AG04449 (cell line): ENCODE measurements at regions of chr7 and their contacts with region 1.

Region 1: DNA sequence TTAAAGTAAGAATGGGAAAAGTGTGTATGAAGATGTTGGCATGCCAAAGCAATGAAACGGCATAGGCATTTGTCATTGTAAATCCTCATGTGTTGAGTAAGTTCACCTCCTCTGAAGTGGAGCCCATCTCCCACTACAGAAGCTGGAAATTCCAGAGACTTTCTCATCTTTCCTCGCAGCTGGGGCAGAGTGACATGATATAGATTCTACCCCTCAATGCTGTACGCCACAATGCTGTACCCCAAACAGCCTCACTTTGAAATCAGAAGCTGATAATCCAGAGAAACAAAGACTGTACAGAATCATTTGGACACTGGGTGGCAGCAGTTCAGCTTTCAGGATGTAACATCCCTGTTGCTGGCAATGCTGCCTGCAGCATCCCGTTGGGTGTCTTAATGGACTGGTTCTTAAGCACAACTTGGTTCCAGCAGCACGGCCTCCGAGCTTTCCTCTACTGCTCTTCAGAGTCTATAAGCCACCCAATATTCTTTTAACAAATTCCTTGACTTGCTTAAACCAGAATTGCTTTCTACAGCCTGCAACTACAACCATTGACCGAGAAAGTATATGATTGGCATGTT is 18.8 kb downstream of the ZC3HAV1L start:
- DNase-seq: no peak
- H3K4me3 ChIP-seq: no peak overlapping the region
- CTCF ChIP-seq: peak; percentile 72

Region 2: DNA sequence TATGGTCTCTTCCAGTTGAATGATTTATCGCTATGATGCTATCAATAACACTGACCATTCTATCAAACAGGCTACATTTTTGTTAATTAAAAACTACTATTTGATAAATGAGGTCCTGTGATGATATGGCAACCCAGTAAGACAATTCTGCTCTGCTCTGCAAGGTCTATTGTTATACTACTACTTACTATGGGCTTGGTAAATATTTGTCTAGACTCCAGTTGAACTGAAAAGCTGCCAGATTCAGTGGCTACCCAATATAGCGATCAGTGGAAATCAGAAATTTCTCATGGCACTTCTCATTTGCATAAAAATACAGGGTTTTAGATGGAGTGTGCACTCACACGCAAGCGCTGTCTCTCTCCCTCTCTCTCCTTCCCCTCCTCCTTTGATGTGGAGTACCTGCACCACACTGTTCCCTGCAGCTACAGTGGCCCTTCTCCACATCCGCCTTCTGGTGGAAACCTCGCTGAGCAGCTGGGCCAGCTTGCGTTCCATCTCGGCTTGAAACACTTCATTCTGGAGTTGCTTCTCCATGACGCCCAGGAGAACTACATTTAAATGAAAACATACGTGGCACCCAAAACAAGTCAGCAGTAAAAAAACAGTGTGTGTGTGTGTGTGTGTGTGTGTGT is 113.7 kb before region 1 on chr7:
- CTCF ChIA-PET with region 1: no interaction called
- POLR2A ChIA-PET with region 1: no interaction called
- DNase-seq: no peak
- H3K4me3 ChIP-seq: no peak overlapping the region
- CTCF ChIP-seq: no peak

Region 3: DNA sequence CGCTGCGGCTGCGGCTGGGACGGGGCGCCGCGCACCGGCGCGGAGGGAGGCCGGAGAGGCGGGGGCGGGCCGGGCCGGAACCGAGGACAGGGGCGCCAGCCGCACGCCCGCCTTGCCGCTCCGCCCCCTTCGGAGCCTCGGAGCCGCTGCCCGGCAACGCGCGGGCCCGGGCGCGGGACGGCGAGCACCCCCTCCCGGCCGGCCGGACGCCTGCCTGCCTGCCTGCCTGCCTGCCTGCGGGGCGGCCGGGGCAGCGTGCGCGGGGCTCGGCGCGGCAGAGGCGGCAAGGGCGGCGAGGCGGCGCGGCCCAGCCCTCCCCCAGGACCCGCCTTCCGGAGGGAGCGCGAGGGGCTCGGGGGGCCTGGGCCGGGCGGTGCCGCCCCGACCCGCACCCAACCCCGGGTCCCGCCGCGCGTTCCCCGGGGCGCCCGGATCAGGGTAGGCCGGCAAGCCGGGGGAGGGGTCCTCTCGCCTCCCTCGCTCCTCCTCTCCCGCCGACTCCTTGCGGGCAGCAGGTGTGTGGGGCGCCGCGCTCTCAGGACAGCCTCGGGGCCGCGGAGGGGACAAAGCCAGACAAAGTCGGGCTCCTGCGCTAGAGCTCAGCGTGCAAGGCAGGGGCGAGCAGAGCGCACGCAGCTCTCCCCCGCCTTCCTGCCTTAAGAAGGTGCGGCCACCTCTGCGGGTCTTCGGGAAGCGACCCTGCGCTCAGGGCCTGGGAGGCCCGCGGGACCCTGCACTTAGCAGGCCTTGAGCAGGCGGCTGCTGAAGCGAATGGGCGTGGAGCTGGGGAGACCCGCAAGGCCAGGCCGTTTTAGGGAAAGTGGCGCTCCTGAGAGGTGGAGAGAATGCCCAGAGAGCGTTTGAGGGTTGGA is 35.5 kb before region 1 on chr7 and contains the start of gene KIAA1549:
- CTCF ChIA-PET with region 1: interaction called, 10 read pairs
- POLR2A ChIA-PET with region 1: no interaction called
- DNase-seq: no peak
- H3K4me3 ChIP-seq: peak within 1 kb of the TSS; percentile 66
- CTCF ChIP-seq: no peak

Region 4: DNA sequence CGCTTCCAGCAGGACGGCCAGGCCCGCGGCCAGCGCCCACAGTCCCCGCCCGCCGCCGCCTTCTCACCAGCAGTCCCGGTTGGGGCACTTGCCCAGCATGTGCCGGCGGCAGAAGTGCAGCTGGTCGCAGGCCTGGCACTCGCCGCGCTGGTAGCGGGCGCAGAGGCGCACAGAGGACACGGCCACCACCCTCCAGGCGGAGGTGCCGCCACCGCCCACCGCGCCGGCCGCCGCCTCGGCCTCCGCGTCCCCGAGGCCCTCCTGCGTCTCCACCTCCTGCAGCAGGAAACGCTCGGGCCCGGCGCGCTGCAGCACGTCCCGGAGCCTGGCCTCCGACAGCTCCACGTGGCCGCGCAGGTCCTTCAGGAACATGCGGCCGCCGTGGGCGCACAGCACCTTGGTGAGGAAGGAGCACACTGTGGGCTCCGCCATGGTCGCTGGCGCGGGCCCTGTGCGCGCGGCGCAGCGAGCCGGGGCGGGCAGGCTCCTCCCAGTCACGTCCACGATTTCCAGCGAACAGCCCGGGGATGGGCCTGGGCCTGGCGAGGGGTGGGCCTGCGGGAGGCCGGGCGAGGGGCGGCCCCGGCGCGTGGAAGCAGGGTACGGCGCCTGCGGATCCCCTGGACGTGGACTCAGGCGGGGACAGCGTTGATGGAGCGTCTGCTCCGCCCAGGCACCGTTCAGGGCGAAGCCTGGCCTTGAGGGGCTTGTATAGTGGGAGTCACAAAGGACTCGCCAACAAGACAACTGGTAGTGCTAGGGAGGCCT is 18.7 kb after region 1 on chr7 and contains the start of gene ZC3HAV1L:
- CTCF ChIA-PET with region 1: interaction called, 33 read pairs
- POLR2A ChIA-PET with region 1: no interaction called
- DNase-seq: no peak
- H3K4me3 ChIP-seq: peak within 1 kb of the TSS; percentile 80
- CTCF ChIP-seq: no peak

Region 5: DNA sequence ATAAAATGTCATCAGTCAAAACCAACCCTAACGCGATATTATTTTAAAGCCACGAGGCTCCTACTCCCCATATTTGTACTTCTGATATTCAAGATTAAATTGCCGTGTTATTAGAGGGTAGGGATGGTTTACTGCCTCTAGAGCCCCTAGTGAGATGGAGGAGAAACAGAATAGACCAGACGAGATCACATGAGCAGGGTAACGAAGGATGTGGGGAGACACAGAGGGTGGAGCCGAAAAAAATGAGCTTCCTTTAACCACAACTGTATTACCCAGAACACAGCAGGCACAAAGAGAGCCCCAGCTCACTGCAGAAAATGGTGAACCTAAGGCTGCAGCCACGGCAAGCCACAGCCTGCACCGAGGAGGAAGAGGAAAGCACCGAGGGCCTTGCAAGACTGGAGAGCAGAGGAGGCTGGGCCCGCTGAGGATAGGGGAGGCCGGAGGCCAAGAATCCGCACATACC is 78.2 kb after region 1 on chr7:
- CTCF ChIA-PET with region 1: no interaction called
- POLR2A ChIA-PET with region 1: no interaction called
- DNase-seq: no peak
- H3K4me3 ChIP-seq: no peak overlapping the region
- CTCF ChIP-seq: no peak

Region 6: DNA sequence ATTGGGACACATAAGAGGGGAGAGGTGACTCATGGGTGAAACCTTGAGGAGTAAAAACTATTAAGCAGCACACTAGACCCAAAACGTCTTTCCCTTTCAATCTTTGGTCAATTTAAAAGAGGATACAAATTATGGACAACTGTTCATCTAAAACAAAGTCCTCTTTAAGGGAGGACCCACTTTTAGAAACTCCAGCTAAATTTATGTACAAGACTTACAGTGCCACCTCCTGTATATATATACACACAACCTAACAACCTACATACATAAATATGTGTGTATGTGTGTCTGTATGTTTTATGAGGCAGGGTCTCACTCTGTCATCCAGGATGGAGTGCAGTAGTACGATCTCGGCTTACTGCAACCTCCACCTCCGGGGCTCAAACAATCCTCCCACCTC is 110.6 kb after region 1 on chr7:
- CTCF ChIA-PET with region 1: interaction called, 10 read pairs
- POLR2A ChIA-PET with region 1: no interaction called
- DNase-seq: no peak
- H3K4me3 ChIP-seq: no peak overlapping the region
- CTCF ChIP-seq: no peak